ENCODE measurements at regions of chr6 and their contacts with region 1.

Region 1: GRCh38 chr6:54717849-54718455 is 128.6 kb upstream of the FAM83B start:
- DNase-seq: peak; percentile 83
- H3K4me3 Mint-ChIP-seq: peak overlapping the region; percentile 63
- H3K27ac Mint-ChIP-seq: peak overlapping the region; percentile 83
- H3K4me1 Mint-ChIP-seq: peaks cover 56% of the 10 kb centered on the region
- H3K27me3 Mint-ChIP-seq: no peaks in the 10 kb centered on the region
- CTCF ChIP-seq: peak; percentile 80

Region 2: DNA sequence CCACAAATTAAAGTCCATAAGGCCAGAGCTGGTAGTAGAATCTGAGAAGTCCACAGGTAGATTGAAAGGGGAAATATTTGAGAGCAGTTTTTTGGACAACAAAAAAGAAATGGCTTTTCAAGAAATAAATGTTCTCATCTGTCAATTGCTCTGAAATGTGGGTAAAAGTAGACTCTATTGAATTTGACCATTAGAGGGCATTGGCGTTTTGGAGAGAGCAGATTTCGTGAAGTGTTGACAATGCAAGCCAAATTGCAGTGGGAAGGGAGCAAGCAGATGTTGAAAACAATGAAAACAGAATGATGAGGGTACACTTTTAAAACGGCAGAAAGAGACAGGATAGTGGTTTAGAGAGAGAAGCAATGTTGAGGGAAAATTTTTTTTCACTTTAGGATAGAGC is 20.5 kb before region 1 on chr6:
- CTCF ChIA-PET with region 1: interaction called, 12 read pairs
- intact Hi-C with region 1: no loop called
- DNase-seq: peak; percentile 19
- H3K4me3 Mint-ChIP-seq: no peak overlapping the region
- H3K27ac Mint-ChIP-seq: peak overlapping the region; percentile 1
- H3K4me1 Mint-ChIP-seq: peaks cover 31% of the 10 kb centered on the region
- H3K27me3 Mint-ChIP-seq: no peaks in the 10 kb centered on the region
- CTCF ChIP-seq: no peak

Region 3: DNA sequence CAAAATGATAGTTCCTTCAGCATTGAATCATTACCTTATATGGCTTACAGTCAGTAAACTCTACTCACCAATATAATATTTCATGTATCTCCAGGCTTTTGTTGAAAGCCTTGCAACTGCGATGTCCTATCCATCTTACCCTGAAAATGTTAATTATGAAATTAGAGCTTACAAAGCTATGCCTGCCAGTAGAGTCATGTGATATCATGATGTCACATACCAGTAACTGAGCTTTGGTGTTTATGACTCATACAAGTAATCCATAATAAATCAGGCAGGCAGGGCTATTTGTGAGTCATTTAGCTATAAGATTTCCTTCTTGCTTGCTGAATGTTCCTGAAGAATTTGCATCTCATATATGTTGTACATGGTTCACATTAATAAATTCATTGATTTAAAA is 83.7 kb after region 1 on chr6:
- CTCF ChIA-PET with region 1: interaction called, 13 read pairs
- intact Hi-C with region 1: loop called (anchors 2 kb)
- DNase-seq: peak; percentile 30
- H3K4me3 Mint-ChIP-seq: peak overlapping the region; percentile 55
- H3K27ac Mint-ChIP-seq: peak overlapping the region; percentile 92
- H3K4me1 Mint-ChIP-seq: peaks cover 28% of the 10 kb centered on the region
- H3K27me3 Mint-ChIP-seq: no peaks in the 10 kb centered on the region
- CTCF ChIP-seq: no peak

Region 4: GRCh38 chr6:54860739-54861138 is 142.8 kb after region 1 on chr6:
- CTCF ChIA-PET with region 1: interaction called, 7 read pairs
- intact Hi-C with region 1: loop called (anchors 5 kb)
- DNase-seq: peak; percentile 69
- H3K4me3 Mint-ChIP-seq: peak overlapping the region; percentile 64
- H3K27ac Mint-ChIP-seq: peak overlapping the region; percentile 98
- H3K4me1 Mint-ChIP-seq: peaks cover 74% of the 10 kb centered on the region
- H3K27me3 Mint-ChIP-seq: no peaks in the 10 kb centered on the region
- CTCF ChIP-seq: no peak

Region 5: GRCh38 chr6:55069132-55069781 is 351.3 kb after region 1 on chr6:
- CTCF ChIA-PET with region 1: interaction called, 20 read pairs
- intact Hi-C with region 1: loop called (anchors 1 kb)
- DNase-seq: peak; percentile 52
- H3K4me3 Mint-ChIP-seq: no peak overlapping the region
- H3K27ac Mint-ChIP-seq: no peak overlapping the region
- H3K4me1 Mint-ChIP-seq: no peaks in the 10 kb centered on the region
- H3K27me3 Mint-ChIP-seq: no peaks in the 10 kb centered on the region
- CTCF ChIP-seq: peak; percentile 54

Measured in Calu3 (cell line).